ENCODE measurements at regions of chr12 and their contacts with region 1.

Region 1: DNA sequence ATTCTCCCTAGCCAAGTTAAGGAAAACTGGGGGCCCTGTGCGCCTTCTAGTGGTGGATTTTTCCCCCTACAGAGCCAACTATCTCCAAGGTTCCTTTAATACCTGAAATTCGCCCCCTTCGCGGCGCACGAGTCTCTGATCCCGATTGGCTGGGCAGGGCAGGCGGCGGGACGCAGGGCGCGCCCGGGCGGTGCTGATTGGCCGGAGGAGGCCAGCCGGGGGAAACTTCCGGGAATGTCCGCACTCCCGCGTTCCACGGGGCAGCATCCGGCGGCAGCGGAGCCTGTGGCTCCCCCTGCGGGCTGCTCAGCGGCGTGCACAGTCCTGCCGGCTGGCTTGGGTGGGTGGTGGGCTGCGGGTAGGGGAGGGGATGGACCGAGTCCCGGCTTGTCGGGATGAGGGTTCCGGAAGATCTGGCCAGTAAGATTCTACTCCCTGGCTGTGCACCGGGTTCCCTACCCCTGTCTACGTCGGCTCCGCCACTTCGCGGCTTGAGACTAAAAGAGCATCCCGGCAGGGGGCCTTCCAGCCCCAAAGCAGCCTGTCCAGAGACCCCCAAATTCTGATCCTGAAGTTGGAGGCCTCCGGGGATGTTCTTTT is at the start of gene NABP2:
- DNase-seq: peak; percentile 99
- H3K4me3 ChIP-seq: peak within 1 kb of the TSS; percentile 11 to 49 (median 49)
- H3K27ac ChIP-seq: peak within 1 kb of the TSS; percentile 77
- H3K4me1 ChIP-seq: peaks cover 19% of the 10 kb centered on the region
- H3K27me3 ChIP-seq: no peaks in the 10 kb centered on the region
- CTCF ChIP-seq: peak; percentile 82 to 96
- POLR2A ChIP-seq: peak; percentile 7
- total RNA-seq, gene NABP2: 41.0 and 42.4 TPM in 2 replicates

Region 2: GRCh38 chr12:56127888-56128669 is 96.1 kb before region 1 on chr12 and contains the start of gene ESYT1:
- CTCF ChIA-PET with region 1: interaction called, 6 read pairs
- POLR2A ChIA-PET with region 1: interaction called, 6 read pairs
- dilution Hi-C with region 1: no loop called
- intact Hi-C with region 1: loop called (anchors 1 kb)
- DNase-seq: peak; percentile 100
- H3K4me3 ChIP-seq: peak within 1 kb of the TSS; percentile 63 to 75 (median 68)
- H3K27ac ChIP-seq: peak within 1 kb of the TSS; percentile 46
- H3K4me1 ChIP-seq: peaks cover 28% of the 10 kb centered on the region
- H3K27me3 ChIP-seq: no peaks in the 10 kb centered on the region
- CTCF ChIP-seq: no peak
- POLR2A ChIP-seq: peak; percentile 82
- total RNA-seq, gene ESYT1: 133 and 161 TPM in 2 replicates

Region 3: GRCh38 chr12:56198836-56199235 is 25.4 kb before region 1 on chr12:
- CTCF ChIA-PET with region 1: interaction called, 42 read pairs
- POLR2A ChIA-PET with region 1: interaction called, 37 read pairs
- dilution Hi-C with region 1: no loop called
- intact Hi-C with region 1: loop called (anchors 1 kb)
- DNase-seq: peak; percentile 69
- H3K4me3 ChIP-seq: no peak overlapping the region
- H3K27ac ChIP-seq: peak overlapping the region; percentile 97
- H3K4me1 ChIP-seq: peaks cover 32% of the 10 kb centered on the region
- H3K27me3 ChIP-seq: no peaks in the 10 kb centered on the region
- CTCF ChIP-seq: no peak
- POLR2A ChIP-seq: no peak

Region 4: GRCh38 chr12:56206457-56207166 is 17.6 kb before region 1 on chr12:
- CTCF ChIA-PET with region 1: interaction called, 63 read pairs
- POLR2A ChIA-PET with region 1: interaction called, 12 read pairs
- dilution Hi-C with region 1: no loop called
- intact Hi-C with region 1: loop called (anchors 1 kb)
- DNase-seq: peak; percentile 52
- H3K4me3 ChIP-seq: no peak overlapping the region
- H3K27ac ChIP-seq: no peak overlapping the region
- H3K4me1 ChIP-seq: peaks cover 17% of the 10 kb centered on the region
- H3K27me3 ChIP-seq: no peaks in the 10 kb centered on the region
- CTCF ChIP-seq: peak; percentile 63 to 73
- POLR2A ChIP-seq: peak; percentile 30

Region 5: GRCh38 chr12:56258057-56258819 is 34.0 kb after region 1 on chr12 and contains the start of gene ANKRD52:
- CTCF ChIA-PET with region 1: interaction called, 6 read pairs
- POLR2A ChIA-PET with region 1: interaction called, 3 read pairs
- dilution Hi-C with region 1: no loop called
- intact Hi-C with region 1: loop called (anchors 1 kb)
- DNase-seq: peak; percentile 76
- H3K4me3 ChIP-seq: peak within 1 kb of the TSS; percentile 84 to 96 (median 91)
- H3K27ac ChIP-seq: peak within 1 kb of the TSS; percentile 22
- H3K4me1 ChIP-seq: peaks cover 18% of the 10 kb centered on the region
- H3K27me3 ChIP-seq: no peaks in the 10 kb centered on the region
- CTCF ChIP-seq: peak; percentile 67 to 74
- POLR2A ChIP-seq: peak; percentile 57
- total RNA-seq, gene ANKRD52: 62.0 and 66.3 TPM in 2 replicates

Region 6: GRCh38 chr12:56266693-56267442 is 42.7 kb after region 1 on chr12 and contains the start of gene COQ10A:
- CTCF ChIA-PET with region 1: no interaction called
- POLR2A ChIA-PET with region 1: no interaction called
- dilution Hi-C with region 1: no loop called
- intact Hi-C with region 1: loop called (anchors 2 kb)
- DNase-seq: peak; percentile 86
- H3K4me3 ChIP-seq: peak within 1 kb of the TSS; percentile 25 to 50 (median 43)
- H3K27ac ChIP-seq: peak within 1 kb of the TSS; percentile 61
- H3K4me1 ChIP-seq: peaks cover 4% of the 10 kb centered on the region
- H3K27me3 ChIP-seq: no peaks in the 10 kb centered on the region
- CTCF ChIP-seq: peak; percentile 24 to 60
- POLR2A ChIP-seq: peak; percentile 90
- total RNA-seq, gene COQ10A: 14.7 and 15.3 TPM in 2 replicates

Region 7: GRCh38 chr12:56346703-56347102 is 122.5 kb after region 1 on chr12:
- CTCF ChIA-PET with region 1: no interaction called
- POLR2A ChIA-PET with region 1: no interaction called
- dilution Hi-C with region 1: no loop called
- intact Hi-C with region 1: no loop called
- DNase-seq: no peak
- H3K4me3 ChIP-seq: no peak overlapping the region
- H3K27ac ChIP-seq: no peak overlapping the region
- H3K4me1 ChIP-seq: no peaks in the 10 kb centered on the region
- H3K27me3 ChIP-seq: no peaks in the 10 kb centered on the region
- CTCF ChIP-seq: no peak
- POLR2A ChIP-seq: no peak

Region 8: GRCh38 chr12:56645717-56646446 is 421.7 kb after region 1 on chr12 and contains the start of gene ATP5F1B:
- CTCF ChIA-PET with region 1: no interaction called
- POLR2A ChIA-PET with region 1: no interaction called
- dilution Hi-C with region 1: no loop called
- intact Hi-C with region 1: loop called (anchors 1 kb)
- DNase-seq: peak; percentile 100
- H3K4me3 ChIP-seq: peak within 1 kb of the TSS; percentile 72 to 86 (median 84)
- H3K27ac ChIP-seq: peak within 1 kb of the TSS; percentile 50
- H3K4me1 ChIP-seq: peaks cover 15% of the 10 kb centered on the region
- H3K27me3 ChIP-seq: no peaks in the 10 kb centered on the region
- CTCF ChIP-seq: no peak
- POLR2A ChIP-seq: peak; percentile 99
- total RNA-seq, gene ATP5F1B: 520 and 590 TPM in 2 replicates